ENCODE measurements at regions of chr16 and their contacts with region 1.

Region 1: DNA sequence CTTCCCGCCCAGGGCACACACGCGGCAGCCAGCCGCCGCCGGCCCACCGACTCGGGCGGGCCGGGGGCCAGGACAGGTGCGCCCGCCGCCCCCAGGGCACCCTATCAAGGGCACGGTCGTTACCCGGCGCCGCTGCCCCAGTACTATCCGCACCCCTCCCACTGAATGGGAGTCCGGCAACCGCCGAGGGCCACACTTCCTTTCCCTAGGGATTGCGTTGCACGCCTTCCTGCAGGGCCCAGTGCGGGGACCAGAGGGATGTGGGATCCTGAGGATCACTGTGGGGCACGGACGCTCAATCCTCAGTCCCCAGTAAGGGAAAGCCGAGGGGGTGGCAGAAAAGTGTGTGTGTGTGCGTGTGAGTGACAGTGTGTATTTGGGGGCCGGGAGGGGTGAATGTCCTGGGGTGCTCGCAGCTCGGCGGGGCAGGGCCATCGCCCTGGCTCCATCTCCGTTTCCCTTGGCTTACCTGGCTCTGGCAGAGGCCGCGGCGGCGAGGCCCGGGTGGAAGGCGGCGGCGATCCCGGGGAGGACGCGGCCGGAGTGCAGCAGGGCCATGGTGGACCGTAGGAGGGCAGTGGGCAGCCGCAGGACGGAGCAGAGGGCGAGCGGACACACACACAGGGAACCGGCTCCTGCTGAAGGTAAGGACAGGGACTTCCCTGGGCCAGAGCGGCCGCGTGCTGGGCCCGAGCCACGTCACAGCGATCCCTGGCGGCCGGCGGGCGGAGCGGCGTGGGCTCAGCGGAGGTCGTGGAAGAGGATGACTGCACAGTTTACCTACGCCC is at the start of gene GOT2:
- DNase-seq: peak; percentile 93
- H3K4me3 ChIP-seq: peak within 1 kb of the TSS; percentile 63 to 84 (median 72)
- H3K27ac ChIP-seq: peak within 1 kb of the TSS; percentile 98
- H3K4me1 ChIP-seq: peaks cover 26% of the 10 kb centered on the region
- H3K27me3 ChIP-seq: no peaks in the 10 kb centered on the region
- CTCF ChIP-seq: peak; percentile 97 to 98
- POLR2A ChIP-seq: peak; percentile 73
- total RNA-seq, gene GOT2: 120 and 127 TPM in 2 replicates

Region 2: DNA sequence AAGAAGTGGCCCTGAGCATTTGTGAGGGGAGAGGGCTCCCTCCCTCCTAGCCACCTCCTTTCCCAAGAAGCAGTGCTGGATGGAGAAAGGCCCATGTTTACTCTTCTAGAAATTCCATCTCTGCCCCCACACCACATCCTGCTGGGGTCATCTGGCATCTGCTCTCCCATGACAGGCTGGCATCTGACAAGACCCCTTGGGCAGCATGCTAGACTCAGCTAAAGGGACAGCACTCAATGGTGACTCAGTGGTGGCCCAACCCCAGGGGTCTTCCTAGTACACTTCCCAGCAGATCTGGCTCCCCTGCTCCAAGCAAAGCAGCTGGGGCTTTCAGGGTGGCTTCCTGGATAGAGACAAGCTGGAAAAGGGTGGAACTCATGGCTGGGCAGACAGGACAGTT is 63.7 kb before region 1 on chr16:
- CTCF ChIA-PET with region 1: no interaction called
- POLR2A ChIA-PET with region 1: no interaction called
- dilution Hi-C with region 1: no loop called
- intact Hi-C with region 1: no loop called
- DNase-seq: no peak
- H3K4me3 ChIP-seq: no peak overlapping the region
- H3K27ac ChIP-seq: no peak overlapping the region
- H3K4me1 ChIP-seq: no peaks in the 10 kb centered on the region
- H3K27me3 ChIP-seq: no peaks in the 10 kb centered on the region
- CTCF ChIP-seq: no peak
- POLR2A ChIP-seq: no peak

Region 3: GRCh38 chr16:58684354-58685083 is 49.3 kb before region 1 on chr16 and contains the start of gene SLC38A7:
- CTCF ChIA-PET with region 1: interaction called, 3 read pairs
- POLR2A ChIA-PET with region 1: no interaction called
- dilution Hi-C with region 1: no loop called
- intact Hi-C with region 1: loop called (anchors 1 kb)
- DNase-seq: peak; percentile 86
- H3K4me3 ChIP-seq: peak within 1 kb of the TSS; percentile 62 to 95 (median 76)
- H3K27ac ChIP-seq: peak within 1 kb of the TSS; percentile 58
- H3K4me1 ChIP-seq: peaks cover 10% of the 10 kb centered on the region
- H3K27me3 ChIP-seq: no peaks in the 10 kb centered on the region
- CTCF ChIP-seq: no peak
- POLR2A ChIP-seq: peak; percentile 75
- total RNA-seq, gene SLC38A7: 44.4 and 45.5 TPM in 2 replicates